ENCODE measurements at regions of chr2 and their contacts with region 1.

Region 1: GRCh38 chr2:69559442-69560146 is 83.9 kb downstream of the AAK1 start:
- H3K4me3 ChIP-seq: no peak overlapping the region
- H3K27ac ChIP-seq: no peak overlapping the region
- H3K4me1 ChIP-seq: peaks cover 7% of the 10 kb centered on the region; the same call in 1 of the 2 replicates
- CTCF ChIP-seq: 0 out of 2 replicates have a peak, but pooled peaks have one; percentile 22

Region 2: GRCh38 chr2:69716555-69717114 is 157.0 kb after region 1 on chr2:
- CTCF ChIA-PET with region 1: interaction called, 20 read pairs
- POLR2A ChIA-PET with region 1: interaction called, 6 read pairs
- H3K4me3 ChIP-seq: no peak overlapping the region
- H3K27ac ChIP-seq: no peak overlapping the region
- H3K4me1 ChIP-seq: no peaks in the 10 kb centered on the region
- CTCF ChIP-seq: no peak

Region 3: DNA sequence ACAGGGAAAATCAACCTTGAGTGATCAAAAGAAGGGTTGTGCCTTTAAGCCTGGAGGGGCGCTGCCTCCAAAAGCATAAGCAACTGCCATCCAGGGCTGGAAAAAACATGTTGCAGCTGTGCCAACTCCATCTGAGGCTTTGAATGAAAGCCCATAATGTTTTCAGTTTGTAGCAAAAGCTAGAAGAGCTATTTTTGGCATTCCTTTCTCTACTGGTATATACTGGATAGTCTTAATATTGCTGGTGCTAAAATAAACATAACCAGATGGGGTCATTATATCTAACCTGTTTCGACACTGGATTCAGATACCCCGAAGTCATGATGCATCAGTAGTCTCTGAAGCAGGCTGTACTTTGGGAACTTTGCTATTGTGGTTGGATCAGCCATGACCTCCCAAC is 207.4 kb after region 1 on chr2:
- CTCF ChIA-PET with region 1: no interaction called
- POLR2A ChIA-PET with region 1: no interaction called
- H3K4me3 ChIP-seq: no peak overlapping the region
- H3K27ac ChIP-seq: no peak overlapping the region
- H3K4me1 ChIP-seq: peaks cover 7% of the 10 kb centered on the region
- CTCF ChIP-seq: no peak